ENCODE measurements at regions of chr1 and their contacts with region 1.

Region 1: DNA sequence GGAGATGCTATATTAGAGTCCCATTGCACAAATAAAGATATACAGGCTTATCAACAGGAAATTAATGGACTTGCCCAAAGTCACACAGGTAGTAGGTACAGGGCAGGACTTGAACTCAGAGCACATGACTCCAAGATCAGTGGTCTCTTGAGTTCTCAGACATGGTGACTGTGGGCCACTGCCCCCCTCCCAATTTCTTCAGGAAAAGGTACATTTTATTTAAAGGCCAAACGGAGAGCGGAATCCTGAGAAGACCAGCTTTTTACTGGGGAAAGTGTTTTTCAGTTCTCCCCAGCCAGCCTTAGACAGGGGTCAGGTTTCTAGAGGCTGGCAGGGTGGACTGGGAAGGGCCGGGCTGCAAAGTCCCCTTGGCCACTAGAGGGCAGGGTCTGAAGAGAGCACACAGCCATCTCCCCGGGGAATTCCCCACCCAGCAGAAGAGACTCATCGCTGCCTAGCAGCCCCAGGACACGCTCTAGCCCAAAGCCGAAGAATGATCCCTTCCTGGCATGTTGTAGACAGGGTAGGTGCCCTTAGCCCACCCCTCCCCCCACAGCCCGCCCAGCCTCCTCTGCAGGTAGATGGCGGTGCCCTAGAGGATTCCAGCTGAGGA is 29.7 kb downstream of the ACP6 start:
- DNase-seq: peak; percentile 90
- H3K4me3 Mint-ChIP-seq: no peak overlapping the region
- H3K27ac Mint-ChIP-seq: no peak overlapping the region
- H3K4me1 Mint-ChIP-seq: peaks cover 4% of the 10 kb centered on the region
- H3K27me3 Mint-ChIP-seq: no peaks in the 10 kb centered on the region
- CTCF ChIP-seq: peak; percentile 96

Region 2: GRCh38 chr1:147504801-147505311 is 135.8 kb before region 1 on chr1:
- CTCF ChIA-PET with region 1: interaction called, 17 read pairs
- POLR2A ChIA-PET with region 1: no interaction called
- intact Hi-C with region 1: no loop called
- DNase-seq: peak; percentile 23
- H3K4me3 Mint-ChIP-seq: no peak overlapping the region
- H3K27ac Mint-ChIP-seq: no peak overlapping the region
- H3K4me1 Mint-ChIP-seq: no peaks in the 10 kb centered on the region
- H3K27me3 Mint-ChIP-seq: peaks cover 16% of the 10 kb centered on the region
- CTCF ChIP-seq: no peak

Region 3: GRCh38 chr1:147627435-147628110 is 13.1 kb before region 1 on chr1:
- CTCF ChIA-PET with region 1: interaction called, 145 read pairs
- POLR2A ChIA-PET with region 1: no interaction called
- intact Hi-C with region 1: no loop called
- DNase-seq: peak; percentile 65
- H3K4me3 Mint-ChIP-seq: no peak overlapping the region
- H3K27ac Mint-ChIP-seq: no peak overlapping the region
- H3K4me1 Mint-ChIP-seq: no peaks in the 10 kb centered on the region
- H3K27me3 Mint-ChIP-seq: no peaks in the 10 kb centered on the region
- CTCF ChIP-seq: peak; percentile 95

Region 4: DNA sequence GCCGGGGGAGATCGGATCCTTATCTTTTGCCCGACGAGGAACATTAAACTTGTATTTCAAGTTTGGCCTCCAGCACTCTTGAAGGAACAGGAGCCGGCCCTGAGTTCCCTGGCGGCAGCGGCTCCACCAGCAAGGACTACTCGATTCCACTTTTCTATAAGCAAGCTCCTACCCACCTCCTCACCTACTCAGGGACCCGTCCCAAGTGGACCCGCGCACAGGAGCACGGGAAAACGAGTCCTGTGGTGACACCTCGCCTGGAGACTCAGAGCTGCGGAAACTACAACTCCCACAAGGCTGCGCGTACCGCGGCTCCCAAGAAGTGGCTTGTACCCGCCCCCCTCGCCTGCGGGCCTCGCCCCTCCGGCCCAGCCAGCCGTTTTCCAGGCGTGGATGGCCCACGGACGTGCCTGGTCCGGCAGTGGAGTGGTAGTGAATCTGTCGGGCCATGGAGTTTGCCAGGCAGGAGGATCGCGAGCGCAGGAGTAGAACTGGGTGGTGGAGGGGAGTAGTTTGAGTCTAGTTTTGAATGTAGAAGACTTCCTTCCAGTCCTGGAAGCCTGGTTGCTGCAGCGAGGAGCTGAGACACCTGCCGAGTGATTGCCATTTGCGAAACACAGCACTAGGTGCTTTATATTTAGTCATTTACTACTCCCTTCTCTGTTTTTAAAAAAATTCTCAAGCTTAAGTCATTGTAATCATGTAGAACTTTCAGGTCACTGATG is 29.8 kb after region 1 on chr1 and contains the start of gene ACP6:
- CTCF ChIA-PET with region 1: interaction called, 18 read pairs
- POLR2A ChIA-PET with region 1: interaction called, 6 read pairs
- intact Hi-C with region 1: no loop called
- DNase-seq: peak; percentile 98
- H3K4me3 Mint-ChIP-seq: peak within 1 kb of the TSS; percentile 93
- H3K27ac Mint-ChIP-seq: peak within 1 kb of the TSS; percentile 75
- H3K4me1 Mint-ChIP-seq: peaks cover 18% of the 10 kb centered on the region
- H3K27me3 Mint-ChIP-seq: no peaks in the 10 kb centered on the region
- CTCF ChIP-seq: no peak
- total RNA-seq, gene ACP6: 40.5 and 54.1 TPM in 2 replicates

Region 5: DNA sequence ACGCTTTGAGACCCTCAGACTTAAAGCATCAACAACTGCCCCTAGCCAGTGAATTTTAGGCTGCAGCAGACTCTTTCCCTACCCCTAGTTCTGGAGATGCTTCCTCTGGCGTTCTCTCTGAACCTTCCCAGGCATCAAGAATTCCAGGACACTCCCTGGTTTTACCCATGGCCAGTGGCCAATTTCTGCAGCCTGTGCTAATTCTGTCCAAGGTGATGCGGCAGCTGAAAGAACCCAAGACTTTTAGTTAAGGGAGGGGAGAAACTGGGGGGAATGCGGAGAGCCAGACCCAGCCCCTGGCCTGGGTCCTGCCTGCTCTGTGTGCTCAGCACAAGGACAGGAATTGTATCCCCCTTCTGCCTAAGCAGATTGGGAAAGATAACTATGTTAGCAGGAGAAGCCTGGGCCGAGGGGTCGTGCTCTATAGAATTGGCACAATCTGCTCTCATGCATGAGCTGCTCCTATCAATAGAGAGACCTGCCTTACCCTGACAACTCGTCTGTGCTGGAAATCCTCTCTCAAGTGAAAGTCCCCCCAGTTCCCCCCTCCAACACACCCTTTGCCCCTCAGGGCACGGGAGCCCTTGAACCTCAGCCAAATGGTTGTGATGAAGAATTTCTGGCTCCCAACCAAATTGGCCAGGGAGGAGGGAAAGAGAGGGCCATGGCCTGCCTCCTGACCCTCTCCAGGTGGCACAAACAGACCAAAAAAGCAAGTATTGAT is 256.5 kb after region 1 on chr1:
- CTCF ChIA-PET with region 1: interaction called, 132 read pairs
- POLR2A ChIA-PET with region 1: no interaction called
- intact Hi-C with region 1: loop called (anchors 1 kb)
- DNase-seq: peak; percentile 86
- H3K4me3 Mint-ChIP-seq: no peak overlapping the region
- H3K27ac Mint-ChIP-seq: peak overlapping the region; percentile 61
- H3K4me1 Mint-ChIP-seq: peaks cover 16% of the 10 kb centered on the region
- H3K27me3 Mint-ChIP-seq: peaks cover 15% of the 10 kb centered on the region
- CTCF ChIP-seq: no peak